ENCODE measurements at regions of chr7 and their contacts with region 1.

Region 1: GRCh38 chr7:786472-787255 is 45.6 kb upstream of the SUN1 start:
- DNase-seq: peak; percentile 67 to 87 (median 84)
- H3K4me3 ChIP-seq: no peak overlapping the region
- H3K27ac ChIP-seq: peak overlapping the region in 1 of 2 donors; percentile 37
- H3K4me1 ChIP-seq: peaks cover 13% of the 10 kb centered on the region
- H3K27me3 ChIP-seq: no peaks in the 10 kb centered on the region
- CTCF ChIP-seq: peak; percentile 37 to 87 (median 85)
- EP300 ChIP-seq: no peak
- POLR2A ChIP-seq: no peak

Region 2: GRCh38 chr7:831596-832166 is 45.0 kb after region 1 on chr7:
- intact Hi-C with region 1: loop called in 2 of 4 experiments (anchors 5 to 10 kb)
- DNase-seq: peak in 1 of 5 donors; percentile 58
- H3K4me3 ChIP-seq: peak overlapping the region; percentile 19
- H3K27ac ChIP-seq: peak overlapping the region; percentile 77 to 89
- H3K4me1 ChIP-seq: peaks cover 29% of the 10 kb centered on the region
- H3K27me3 ChIP-seq: no peaks in the 10 kb centered on the region
- CTCF ChIP-seq: no peak
- EP300 ChIP-seq: peak; percentile 17
- POLR2A ChIP-seq: peak; percentile 37

Region 3: GRCh38 chr7:867672-868486 is 81.2 kb after region 1 on chr7:
- intact Hi-C with region 1: loop called (anchors 5 to 10 kb)
- DNase-seq: peak; percentile 36 to 70 (median 60)
- H3K4me3 ChIP-seq: no peak overlapping the region
- H3K27ac ChIP-seq: peak overlapping the region; percentile 81 to 85
- H3K4me1 ChIP-seq: peaks cover 19% of the 10 kb centered on the region
- H3K27me3 ChIP-seq: no peaks in the 10 kb centered on the region
- CTCF ChIP-seq: no peak
- EP300 ChIP-seq: no peak
- POLR2A ChIP-seq: no peak

Region 4: DNA sequence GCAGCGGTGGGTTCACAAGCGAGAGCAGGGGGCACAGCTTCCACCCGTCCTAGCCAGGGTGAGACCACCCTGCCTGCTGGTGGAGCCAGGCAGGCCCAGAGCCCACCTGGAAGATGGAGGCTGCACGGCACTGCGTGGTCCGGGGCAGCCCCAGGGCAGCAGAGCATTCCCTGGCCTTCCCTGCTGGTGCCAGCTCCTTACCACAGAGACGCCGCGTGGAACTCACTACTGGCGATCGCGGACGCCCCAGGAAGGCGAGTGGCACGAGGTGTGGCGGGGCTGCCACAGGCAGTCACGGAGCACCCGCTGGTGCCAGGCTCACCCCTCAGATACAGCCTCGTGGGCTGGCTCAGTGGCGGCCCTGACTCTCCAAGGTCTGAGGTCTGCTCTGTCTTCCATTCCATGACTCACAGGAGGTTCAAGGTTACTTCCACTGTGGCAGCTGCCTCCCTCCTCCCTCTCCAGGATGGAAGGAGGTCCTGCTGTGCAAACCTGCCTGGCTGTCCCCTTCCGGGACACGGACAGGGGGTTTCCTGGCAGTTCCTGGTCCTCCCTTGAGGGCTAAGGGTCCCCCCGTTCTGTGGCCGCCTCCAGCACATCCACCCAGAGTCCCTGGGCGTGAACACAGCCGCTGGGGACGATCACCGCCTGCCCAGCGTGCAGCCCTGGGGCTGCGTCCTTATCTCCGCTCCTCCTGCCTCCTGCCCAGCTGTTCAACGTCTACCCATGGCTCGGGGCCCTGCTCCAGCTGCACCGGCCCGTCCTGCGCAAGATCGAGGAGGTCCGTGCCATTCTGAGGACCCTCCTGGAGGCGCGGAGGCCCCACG is 199.5 kb after region 1 on chr7:
- intact Hi-C with region 1: loop called in 1 of 4 experiments (anchors 10 kb)
- DNase-seq: peak; percentile 67 to 82 (median 74)
- H3K4me3 ChIP-seq: no peak overlapping the region
- H3K27ac ChIP-seq: peak overlapping the region in 1 of 2 donors; percentile 59
- H3K4me1 ChIP-seq: peaks cover 30% of the 10 kb centered on the region
- H3K27me3 ChIP-seq: no peaks in the 10 kb centered on the region
- CTCF ChIP-seq: no peak
- EP300 ChIP-seq: no peak
- POLR2A ChIP-seq: peak; percentile 8